Activated naive CD4-positive, alpha-beta T cell treated with anti-CD3 and anti-CD28 coated beads for 36 hours (primary cell): ENCODE measurements at regions of chr2 and their contacts with region 1.

Region 1: GRCh38 chr2:232581725-232582124 is 31.2 kb downstream of the EIF4E2 start:
- DNase-seq: no peak
- H3K4me3 Mint-ChIP-seq: no peak overlapping the region
- H3K27ac Mint-ChIP-seq: no peak overlapping the region
- H3K4me1 Mint-ChIP-seq: peaks cover 3% of the 10 kb centered on the region
- H3K27me3 Mint-ChIP-seq: no peaks in the 10 kb centered on the region

Region 2: DNA sequence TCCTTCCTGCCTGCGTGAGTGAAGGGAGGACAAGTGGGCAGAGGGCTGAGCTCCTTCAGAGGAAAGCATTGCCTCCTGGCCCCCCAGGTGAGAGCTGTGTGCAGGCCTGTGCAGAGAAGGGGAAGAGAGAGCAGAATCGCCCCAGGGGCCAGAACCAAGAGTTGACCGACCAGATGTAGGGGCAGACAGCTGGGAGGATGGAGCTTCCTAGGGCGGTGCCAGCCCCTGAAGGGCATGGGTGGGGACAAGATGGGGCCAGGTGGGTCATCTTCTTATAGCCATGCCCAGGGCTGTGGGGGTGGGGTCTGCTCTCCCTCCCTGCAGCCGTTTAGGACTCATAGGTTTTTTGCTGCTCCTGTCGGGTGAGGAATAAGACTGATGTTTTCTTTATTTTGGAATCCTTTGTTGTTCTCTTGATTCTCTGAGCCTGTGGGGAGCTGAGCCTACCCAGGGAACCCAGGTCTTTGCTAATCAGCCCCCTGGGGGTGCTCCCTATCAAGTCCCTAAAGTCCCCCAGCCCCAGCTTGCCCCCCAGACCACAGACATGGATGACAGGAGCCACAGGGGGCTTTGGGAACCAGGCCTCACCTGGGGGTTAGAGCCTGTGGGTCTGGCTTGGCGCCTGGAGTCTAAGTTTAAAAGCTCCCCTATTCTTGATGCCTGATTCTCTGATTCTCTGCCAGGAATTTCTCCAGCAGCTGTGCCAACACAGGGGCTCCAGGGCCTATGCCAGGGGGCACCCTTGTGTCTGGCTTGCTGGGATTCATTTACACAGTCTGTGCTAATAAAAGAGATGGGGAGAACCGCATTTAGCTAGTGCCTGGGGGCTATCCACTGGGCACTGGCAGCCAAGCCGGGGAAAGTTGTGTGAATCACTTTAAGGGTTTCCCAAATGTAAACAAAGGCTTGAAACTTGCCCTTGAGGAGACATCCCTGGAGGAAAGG is 42.3 kb after region 1 on chr2:
- CTCF ChIA-PET with region 1: no interaction called
- intact Hi-C with region 1: loop called (anchors 2 kb)
- DNase-seq: no peak
- H3K4me3 Mint-ChIP-seq: no peak overlapping the region
- H3K27ac Mint-ChIP-seq: no peak overlapping the region
- H3K4me1 Mint-ChIP-seq: no peaks in the 10 kb centered on the region
- H3K27me3 Mint-ChIP-seq: peaks cover 5% of the 10 kb centered on the region